GM13976 (cell line): ENCODE measurements at regions of chr5 and their contacts with region 1.

Region 1: GRCh38 chr5:98911280-98912040 is 17.3 kb downstream of the CHD1 start:
- DNase-seq: no peak
- CTCF ChIP-seq: no peak

Region 2: DNA sequence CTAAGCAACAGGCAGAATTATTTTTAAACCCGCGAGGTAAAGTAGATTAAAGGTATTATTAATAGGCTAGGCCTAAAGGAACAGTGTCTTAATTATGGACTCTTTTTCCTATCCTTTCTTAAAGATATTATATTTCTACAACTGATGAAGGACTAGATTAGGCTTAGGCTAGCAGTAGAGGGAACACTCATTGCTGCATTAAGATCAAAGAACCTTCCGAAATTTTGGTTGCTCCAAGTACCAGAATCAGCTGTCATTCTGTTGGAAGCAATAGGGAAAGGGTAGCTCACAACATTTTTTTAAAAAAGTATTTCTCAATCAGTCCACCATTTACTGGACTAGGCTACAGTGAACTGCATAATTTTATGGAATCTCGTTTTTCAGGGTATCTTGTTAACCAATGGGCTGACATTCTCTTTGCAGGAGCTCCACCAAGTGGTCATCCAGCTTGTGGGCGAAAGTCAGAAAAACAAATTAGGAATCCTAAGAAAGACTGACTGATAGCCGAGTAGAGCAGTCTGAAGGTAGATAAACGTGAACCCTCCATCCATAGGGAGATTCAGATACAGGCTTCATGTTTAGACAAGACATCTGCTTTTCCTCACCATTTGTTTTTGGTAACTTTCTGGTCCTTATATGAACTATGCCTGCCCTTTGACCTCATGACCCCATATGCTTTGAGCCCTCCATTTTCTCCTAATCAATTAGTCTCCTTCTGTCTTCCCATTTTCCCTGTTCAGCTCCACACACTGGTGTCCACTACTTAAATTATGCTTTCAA is 121.0 kb after region 1 on chr5:
- in situ Hi-C with region 1: loop called (anchors 5 kb)
- DNase-seq: peak; percentile 39
- CTCF ChIP-seq: peak; percentile 55